Spleen (tissue), 13 donors: ENCODE measurements at regions of chr18 and their contacts with region 1.

Region 1: DNA sequence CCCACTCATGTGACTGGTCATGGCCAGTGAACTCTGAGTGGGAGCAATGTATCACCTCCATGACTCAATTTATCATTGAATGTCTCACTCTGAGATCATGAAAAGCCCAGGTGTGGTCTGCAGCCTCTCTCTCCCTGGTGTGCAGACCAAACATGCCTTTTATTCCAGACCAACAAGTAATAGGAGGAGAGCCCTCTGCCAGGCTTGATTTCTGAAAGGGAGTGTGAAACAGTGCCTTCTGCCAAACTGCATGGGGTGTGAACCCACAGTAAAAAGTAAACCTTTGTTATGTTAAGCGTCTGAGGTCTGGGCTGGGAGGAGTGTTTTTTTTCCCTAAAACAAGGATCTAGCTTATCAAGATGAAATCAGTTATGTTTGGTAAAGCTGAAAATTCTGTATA is 601.2 kb downstream of the ADCYAP1 start:
- DNase-seq: no peak
- H3K4me3 ChIP-seq: no peak overlapping the region
- H3K27ac ChIP-seq: no peak overlapping the region
- H3K4me1 ChIP-seq: no peaks in the 10 kb centered on the region
- H3K27me3 ChIP-seq: no peaks in the 10 kb centered on the region
- CTCF ChIP-seq: no peak
- POLR2A ChIP-seq: no peak

Region 2: DNA sequence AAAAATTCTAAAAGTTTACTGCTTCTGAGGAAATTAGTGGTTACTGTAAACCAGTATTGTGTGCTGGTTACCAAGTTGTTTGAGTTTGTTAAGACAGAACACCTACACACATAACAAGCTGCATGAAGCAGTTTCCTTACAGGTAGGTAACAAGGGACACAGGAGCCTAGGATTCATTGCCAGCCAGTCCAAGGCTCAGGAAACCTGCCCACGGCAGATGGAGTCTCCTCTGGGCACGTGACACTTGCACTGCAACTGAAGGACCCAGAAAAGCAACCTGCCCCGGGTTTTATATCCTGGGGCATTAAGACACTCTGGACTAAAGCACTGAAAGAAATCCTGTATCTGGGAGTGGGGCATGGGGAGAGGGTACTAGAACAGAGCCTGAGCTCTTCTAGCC is 38.2 kb after region 1 on chr18:
- intact Hi-C with region 1: loop called (anchors 2 kb)
- DNase-seq: no peak
- H3K4me3 ChIP-seq: no peak overlapping the region
- H3K27ac ChIP-seq: no peak overlapping the region
- H3K4me1 ChIP-seq: no peaks in the 10 kb centered on the region
- H3K27me3 ChIP-seq: no peaks in the 10 kb centered on the region
- CTCF ChIP-seq: no peak
- POLR2A ChIP-seq: no peak

Region 3: DNA sequence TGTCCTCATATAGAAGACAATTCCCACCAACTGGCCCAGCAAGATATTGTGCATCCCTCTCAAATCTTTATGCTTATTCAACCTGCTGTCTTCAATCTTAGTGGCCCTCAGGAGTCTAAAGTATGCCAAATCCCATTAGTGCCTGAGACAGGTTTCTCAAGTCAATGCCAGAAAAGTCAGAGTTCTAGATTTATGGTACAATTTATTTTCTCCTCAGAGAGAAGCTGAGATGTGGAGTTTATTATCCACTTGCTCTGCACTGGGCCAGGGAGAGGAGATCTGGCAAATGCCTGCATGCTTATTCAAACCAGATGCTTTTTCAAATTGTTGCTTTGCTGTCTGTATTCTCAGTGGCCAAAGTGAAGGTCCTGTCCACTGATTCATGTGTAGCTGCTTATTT is 240.3 kb after region 1 on chr18:
- intact Hi-C with region 1: no loop called
- DNase-seq: no peak
- H3K4me3 ChIP-seq: no peak overlapping the region
- H3K27ac ChIP-seq: no peak overlapping the region
- H3K4me1 ChIP-seq: no peaks in the 10 kb centered on the region
- H3K27me3 ChIP-seq: no peaks in the 10 kb centered on the region
- CTCF ChIP-seq: no peak
- POLR2A ChIP-seq: no peak